Caco-2 (cell line): ENCODE measurements at regions of chrX and their contacts with region 1.

Region 1: DNA sequence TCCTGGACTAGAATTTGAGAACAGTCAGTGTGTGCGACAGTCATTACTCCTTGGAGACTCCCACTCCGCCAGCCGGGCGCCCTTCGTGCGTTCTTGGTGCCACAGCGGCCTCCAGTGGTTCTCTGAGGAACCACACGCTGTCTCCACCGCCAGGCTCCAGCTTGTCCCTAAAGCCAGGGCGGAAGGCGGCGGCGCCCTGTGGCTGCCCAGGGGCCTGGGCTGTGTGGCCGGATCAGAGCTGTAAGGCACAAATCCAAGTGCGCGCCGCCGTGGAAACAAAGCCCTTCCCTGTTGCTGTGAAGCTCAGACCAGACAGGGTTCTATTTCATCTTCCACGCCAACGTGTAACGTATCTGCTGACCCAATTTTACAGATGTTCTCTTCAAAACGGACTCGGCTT is 34.2 kb downstream of the IDS start:
- DNase-seq: peak; percentile 65 to 77
- H3K4me3 ChIP-seq: no peak overlapping the region
- H3K4me3 Mint-ChIP-seq: no peak overlapping the region
- H3K27ac Mint-ChIP-seq: no peak overlapping the region
- H3K4me1 ChIP-seq: no peaks in the 10 kb centered on the region
- H3K4me1 Mint-ChIP-seq: no peaks in the 10 kb centered on the region
- H3K27me3 ChIP-seq: no peaks in the 10 kb centered on the region
- H3K27me3 Mint-ChIP-seq: peaks cover under 1% of the 10 kb centered on the region
- CTCF ChIP-seq: peak; percentile 62 to 73

Region 2: DNA sequence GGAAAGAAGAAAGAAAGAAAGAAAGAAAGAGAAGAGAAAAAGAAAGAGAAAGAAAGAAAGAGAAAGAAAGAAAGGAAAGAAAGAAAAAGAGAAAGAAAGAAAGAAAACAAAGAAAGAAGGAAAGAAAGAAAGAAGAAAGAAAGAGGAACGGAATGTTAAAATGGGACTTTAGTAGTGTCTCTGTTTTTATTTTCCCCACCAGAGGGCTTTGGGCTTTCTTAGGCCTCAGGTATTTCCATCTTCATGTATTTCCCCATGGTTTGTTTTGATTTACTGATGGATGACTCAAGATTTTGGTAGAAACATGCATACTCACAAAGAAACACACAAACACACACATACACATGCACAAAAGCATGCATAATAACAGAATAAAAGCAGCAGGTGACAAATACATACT is 789.4 kb before region 1 on chrX:
- CTCF ChIA-PET with region 1: no interaction called
- POLR2A ChIA-PET with region 1: no interaction called
- intact Hi-C with region 1: loop called (anchors 10 kb)
- DNase-seq: no peak
- H3K4me3 ChIP-seq: no peak overlapping the region
- H3K4me3 Mint-ChIP-seq: no peak overlapping the region
- H3K27ac Mint-ChIP-seq: no peak overlapping the region
- H3K4me1 ChIP-seq: no peaks in the 10 kb centered on the region
- H3K4me1 Mint-ChIP-seq: no peaks in the 10 kb centered on the region
- H3K27me3 ChIP-seq: no peaks in the 10 kb centered on the region
- H3K27me3 Mint-ChIP-seq: no peaks in the 10 kb centered on the region
- CTCF ChIP-seq: no peak

Region 3: GRCh38 chrX:149306445-149306844 is 164.5 kb before region 1 on chrX:
- CTCF ChIA-PET with region 1: interaction called, 6 read pairs
- POLR2A ChIA-PET with region 1: no interaction called
- intact Hi-C with region 1: loop called (anchors 1 kb)
- DNase-seq: no peak
- H3K4me3 ChIP-seq: no peak overlapping the region
- H3K4me3 Mint-ChIP-seq: no peak overlapping the region
- H3K27ac Mint-ChIP-seq: no peak overlapping the region
- H3K4me1 ChIP-seq: no peaks in the 10 kb centered on the region
- H3K4me1 Mint-ChIP-seq: no peaks in the 10 kb centered on the region
- H3K27me3 ChIP-seq: no peaks in the 10 kb centered on the region
- H3K27me3 Mint-ChIP-seq: peaks cover 7% of the 10 kb centered on the region
- CTCF ChIP-seq: peak in 1 of 2 experiments; percentile 4